ENCODE measurements at regions of chr1 and their contacts with region 1.

Region 1: DNA sequence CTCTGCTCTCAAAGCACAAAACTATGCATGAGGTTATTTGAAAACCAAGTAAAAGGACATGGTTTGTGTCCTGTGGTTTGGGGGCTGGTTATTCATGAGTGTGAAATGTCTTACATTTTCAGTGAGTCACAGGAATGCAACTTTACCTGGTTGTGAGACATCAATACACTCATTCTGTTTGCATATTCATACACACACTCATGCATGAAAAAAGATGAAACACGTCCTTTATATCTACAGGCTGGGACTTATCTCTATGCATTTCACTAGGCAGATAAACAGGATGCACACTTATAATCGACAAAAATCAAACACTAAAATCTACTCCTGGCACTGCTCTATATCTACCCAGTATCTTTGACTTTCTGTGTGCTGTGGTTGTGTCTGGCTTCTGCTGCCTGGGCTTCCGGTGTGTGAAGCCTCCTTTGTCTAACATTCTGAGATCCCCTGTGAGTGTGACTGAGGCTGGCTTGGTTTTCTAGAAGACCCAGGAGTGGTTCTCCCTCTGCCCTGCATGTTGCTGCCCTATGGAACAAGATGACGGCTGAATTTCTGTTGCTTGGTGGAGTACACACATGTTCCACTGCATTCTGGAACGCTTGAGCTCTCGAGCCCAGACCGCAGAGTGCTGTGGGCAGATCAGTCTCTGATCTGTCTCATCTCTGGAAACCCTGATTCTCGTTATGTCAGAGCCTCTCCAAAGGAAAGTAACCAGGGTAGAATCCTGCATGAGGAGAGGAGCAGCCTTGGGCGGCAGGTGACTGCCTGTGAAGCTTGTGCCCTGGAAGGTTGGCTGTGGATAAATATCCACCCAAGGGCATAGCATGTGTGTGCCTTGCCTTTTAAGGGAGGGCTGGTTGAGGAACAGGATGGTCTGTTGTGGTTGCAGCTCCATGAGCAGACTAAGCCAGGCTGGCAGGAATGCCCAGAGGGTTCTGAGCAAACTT is 19.7 kb upstream of the FASLG start:
- DNase-seq: peak; percentile 84
- H3K4me3 Mint-ChIP-seq: peak overlapping the region; percentile 59
- H3K27ac Mint-ChIP-seq: peak overlapping the region; percentile 86
- H3K4me1 Mint-ChIP-seq: peaks cover 67% of the 10 kb centered on the region
- H3K27me3 Mint-ChIP-seq: peaks cover 53% of the 10 kb centered on the region

Region 2: GRCh38 chr1:172487550-172487949 is 151.6 kb before region 1 on chr1:
- CTCF ChIA-PET with region 1: no interaction called
- POLR2A ChIA-PET with region 1: no interaction called
- DNase-seq: no peak
- H3K4me3 Mint-ChIP-seq: no peak overlapping the region
- H3K27ac Mint-ChIP-seq: no peak overlapping the region
- H3K4me1 Mint-ChIP-seq: peaks cover 6% of the 10 kb centered on the region
- H3K27me3 Mint-ChIP-seq: peaks cover 33% of the 10 kb centered on the region

Region 3: DNA sequence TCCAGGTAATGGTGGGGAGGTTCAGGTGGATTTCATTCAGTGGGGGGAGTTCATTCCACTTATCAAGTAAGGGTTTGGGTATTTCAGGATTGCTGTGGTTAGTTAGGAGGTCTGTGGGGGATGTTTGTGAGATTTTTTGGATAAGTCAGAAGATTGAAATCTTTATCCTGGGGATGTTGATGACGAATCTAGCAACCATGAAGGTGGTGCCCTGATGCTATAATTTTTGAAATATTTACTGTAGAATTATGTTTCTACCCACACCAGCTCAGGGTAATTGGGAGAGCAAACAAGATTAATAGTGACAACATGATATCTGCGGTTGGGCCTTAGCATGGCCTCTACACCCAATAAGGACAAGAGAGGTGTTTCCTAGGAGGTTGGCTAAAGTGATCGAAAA is 77.9 kb before region 1 on chr1:
- CTCF ChIA-PET with region 1: no interaction called
- POLR2A ChIA-PET with region 1: no interaction called
- DNase-seq: no peak
- H3K4me3 Mint-ChIP-seq: no peak overlapping the region
- H3K27ac Mint-ChIP-seq: no peak overlapping the region
- H3K4me1 Mint-ChIP-seq: peaks cover 4% of the 10 kb centered on the region
- H3K27me3 Mint-ChIP-seq: no peaks in the 10 kb centered on the region

Region 4: DNA sequence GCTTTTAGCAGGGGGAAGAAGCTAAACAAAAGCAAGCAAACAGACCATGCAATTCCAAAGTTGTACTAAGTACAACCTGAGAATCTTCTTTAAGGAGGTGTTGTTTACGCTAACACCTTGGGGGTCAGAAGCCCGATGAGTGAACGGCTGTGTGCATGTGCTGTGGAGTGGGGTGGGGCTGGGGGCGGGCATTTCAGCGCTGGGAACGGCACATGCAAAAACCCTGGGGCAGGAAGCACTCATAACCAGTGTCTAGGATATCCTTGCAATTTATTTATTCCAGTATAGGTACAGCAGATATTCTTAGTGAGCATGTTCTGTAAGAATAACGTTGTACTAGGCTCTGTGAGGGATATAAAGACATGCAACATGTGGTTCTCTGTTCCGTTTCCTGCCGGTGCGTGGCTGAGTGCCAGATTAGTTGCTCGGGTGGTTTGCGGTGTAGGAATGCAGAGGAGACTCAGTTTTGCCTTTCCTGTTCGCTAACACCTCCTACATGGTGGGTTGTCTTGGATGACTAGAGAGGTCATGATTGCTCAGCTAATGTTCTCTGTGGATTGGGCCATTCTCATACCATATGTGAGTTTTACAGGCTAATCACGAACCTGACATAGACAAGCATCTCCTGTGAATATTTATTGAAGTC is 23.4 kb after region 1 on chr1:
- CTCF ChIA-PET with region 1: interaction called, 7 read pairs
- POLR2A ChIA-PET with region 1: interaction called, 13 read pairs
- DNase-seq: peak; percentile 91
- H3K4me3 Mint-ChIP-seq: peak overlapping the region; percentile 41
- H3K27ac Mint-ChIP-seq: peak overlapping the region; percentile 72
- H3K4me1 Mint-ChIP-seq: peaks cover 53% of the 10 kb centered on the region
- H3K27me3 Mint-ChIP-seq: peaks cover 5% of the 10 kb centered on the region

Region 5: DNA sequence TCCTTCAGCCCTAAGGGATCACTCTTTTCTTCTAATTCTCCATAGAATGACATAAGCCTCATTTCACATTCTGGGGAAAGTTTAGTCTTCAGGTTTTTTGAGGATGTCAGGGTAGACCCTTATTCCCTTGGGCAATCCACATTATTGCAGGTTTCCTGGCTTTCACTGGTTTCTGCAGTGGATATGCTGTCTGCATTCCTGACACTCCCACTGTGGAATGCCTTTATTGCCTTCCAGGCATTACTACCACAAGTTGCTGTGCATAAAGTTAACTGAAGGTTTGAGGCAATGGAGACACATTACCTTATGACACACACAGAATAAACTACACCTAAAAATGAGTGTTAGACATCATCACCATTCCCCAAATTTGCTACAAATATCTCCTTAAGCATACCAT is 32.4 kb after region 1 on chr1:
- CTCF ChIA-PET with region 1: interaction called, 5 read pairs
- POLR2A ChIA-PET with region 1: interaction called, 10 read pairs
- DNase-seq: no peak
- H3K4me3 Mint-ChIP-seq: no peak overlapping the region
- H3K27ac Mint-ChIP-seq: no peak overlapping the region
- H3K4me1 Mint-ChIP-seq: peaks cover 60% of the 10 kb centered on the region
- H3K27me3 Mint-ChIP-seq: no peaks in the 10 kb centered on the region

Region 6: DNA sequence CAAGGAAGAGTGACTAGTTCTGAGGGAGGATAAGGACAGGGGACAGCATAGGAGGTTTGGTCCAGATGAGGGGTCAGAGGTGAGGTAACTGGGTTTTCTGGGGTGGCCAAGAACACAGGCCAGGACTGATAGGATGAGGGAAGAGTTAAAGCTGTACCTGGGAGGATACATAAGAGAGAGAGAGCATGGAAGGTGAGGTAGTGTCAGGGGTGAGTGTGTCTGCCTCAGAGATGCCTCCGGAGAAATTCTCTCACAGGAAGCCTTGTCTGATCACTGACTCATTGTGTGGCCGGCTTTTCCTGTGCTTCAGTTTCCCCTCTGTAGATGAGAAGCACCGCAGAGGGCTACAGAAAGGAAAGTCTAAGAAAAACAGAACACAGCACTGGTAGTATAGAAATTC is 60.0 kb after region 1 on chr1:
- CTCF ChIA-PET with region 1: interaction called, 3 read pairs
- POLR2A ChIA-PET with region 1: interaction called, 10 read pairs
- DNase-seq: peak; percentile 82
- H3K4me3 Mint-ChIP-seq: peak overlapping the region; percentile 18
- H3K27ac Mint-ChIP-seq: peak overlapping the region; percentile 94
- H3K4me1 Mint-ChIP-seq: peaks cover 47% of the 10 kb centered on the region
- H3K27me3 Mint-ChIP-seq: peaks cover 2% of the 10 kb centered on the region

Region 7: DNA sequence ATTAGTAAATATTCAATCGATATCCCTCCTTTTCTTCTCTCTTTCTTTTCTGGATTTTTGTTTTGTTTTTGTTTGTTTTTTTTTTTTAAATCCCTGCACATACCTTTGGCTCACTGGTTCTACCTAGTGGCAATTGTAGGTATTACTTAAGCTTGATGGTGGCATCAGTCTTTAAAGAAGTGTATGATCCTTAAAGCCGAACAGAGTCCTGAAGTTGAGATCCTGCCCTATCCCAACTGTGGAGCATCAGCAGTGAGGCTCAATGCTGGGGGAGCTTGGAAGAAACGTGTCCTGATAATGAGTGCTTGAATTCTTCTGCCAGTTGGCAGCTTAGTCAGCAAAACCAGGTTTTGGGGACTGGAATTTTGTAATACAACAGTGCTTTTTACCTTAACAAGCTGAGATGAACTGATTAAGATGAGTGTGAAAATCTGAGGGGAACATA is 80.6 kb after region 1 on chr1:
- CTCF ChIA-PET with region 1: interaction called, 15 read pairs
- POLR2A ChIA-PET with region 1: interaction called, 4 read pairs
- DNase-seq: no peak
- H3K4me3 Mint-ChIP-seq: no peak overlapping the region
- H3K27ac Mint-ChIP-seq: no peak overlapping the region
- H3K4me1 Mint-ChIP-seq: peaks cover 24% of the 10 kb centered on the region
- H3K27me3 Mint-ChIP-seq: peaks cover 12% of the 10 kb centered on the region

Measured in activated CD4-positive, alpha-beta memory T cell treated with anti-CD3 and anti-CD28 coated beads, Interleukin-2, amount 10 ng/mL, durations not matched to agents 7 days and 5 days (primary cell).